ENCODE measurements at regions of chr1 and their contacts with region 1.

Region 1: DNA sequence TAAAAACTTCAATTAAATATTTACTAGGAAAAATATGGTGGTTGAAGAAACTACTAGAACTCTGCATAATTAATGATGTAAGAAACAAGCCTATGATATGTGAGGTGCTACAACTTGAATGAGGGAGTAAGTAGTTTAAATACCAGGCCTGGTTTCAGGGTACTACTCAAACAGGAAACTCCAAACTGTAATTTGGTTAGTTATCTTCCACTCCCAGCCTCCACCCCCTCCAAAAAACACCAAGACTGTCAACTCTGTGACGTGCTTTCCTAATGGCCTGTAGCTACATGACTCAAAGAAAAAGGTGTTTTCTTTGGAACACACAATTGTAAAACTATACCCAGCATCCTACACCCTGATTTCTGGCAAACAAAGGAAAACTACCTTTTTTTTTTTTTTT is 55.9 kb upstream of the RCC1 start:
- DNase-seq: peak; percentile 49
- H3K4me3 Mint-ChIP-seq: peak overlapping the region; percentile 47
- H3K27ac Mint-ChIP-seq: peak overlapping the region; percentile 88
- H3K4me1 Mint-ChIP-seq: peaks cover 42% of the 10 kb centered on the region
- H3K27me3 Mint-ChIP-seq: no peaks in the 10 kb centered on the region

Region 2: GRCh38 chr1:27779122-27779521 is 670.8 kb before region 1 on chr1:
- intact Hi-C with region 1: no loop called
- DNase-seq: no peak
- H3K4me3 Mint-ChIP-seq: no peak overlapping the region
- H3K27ac Mint-ChIP-seq: no peak overlapping the region
- H3K4me1 Mint-ChIP-seq: peaks cover 21% of the 10 kb centered on the region
- H3K27me3 Mint-ChIP-seq: no peaks in the 10 kb centered on the region

Region 3: GRCh38 chr1:28259307-28260167 is 190.4 kb before region 1 on chr1 and contains the start of gene SESN2:
- intact Hi-C with region 1: loop called (anchors 1 kb)
- DNase-seq: peak; percentile 99
- H3K4me3 Mint-ChIP-seq: peak within 1 kb of the TSS; percentile 82
- H3K27ac Mint-ChIP-seq: peak within 1 kb of the TSS; percentile 90
- H3K4me1 Mint-ChIP-seq: peaks cover 51% of the 10 kb centered on the region
- H3K27me3 Mint-ChIP-seq: no peaks in the 10 kb centered on the region
- total RNA-seq, gene SESN2: 18.7 and 19.3 TPM in 2 replicates

Region 4: GRCh38 chr1:28369371-28370238 is 80.3 kb before region 1 on chr1 and contains the start of gene PHACTR4:
- intact Hi-C with region 1: loop called (anchors 5 kb)
- DNase-seq: peak; percentile 78
- H3K4me3 Mint-ChIP-seq: peak within 1 kb of the TSS; percentile 91
- H3K27ac Mint-ChIP-seq: peak within 1 kb of the TSS; percentile 95
- H3K4me1 Mint-ChIP-seq: peaks cover 36% of the 10 kb centered on the region
- H3K27me3 Mint-ChIP-seq: peaks cover 3% of the 10 kb centered on the region
- total RNA-seq, gene PHACTR4: 28.9 and 31.8 TPM in 2 replicates

Region 5: DNA sequence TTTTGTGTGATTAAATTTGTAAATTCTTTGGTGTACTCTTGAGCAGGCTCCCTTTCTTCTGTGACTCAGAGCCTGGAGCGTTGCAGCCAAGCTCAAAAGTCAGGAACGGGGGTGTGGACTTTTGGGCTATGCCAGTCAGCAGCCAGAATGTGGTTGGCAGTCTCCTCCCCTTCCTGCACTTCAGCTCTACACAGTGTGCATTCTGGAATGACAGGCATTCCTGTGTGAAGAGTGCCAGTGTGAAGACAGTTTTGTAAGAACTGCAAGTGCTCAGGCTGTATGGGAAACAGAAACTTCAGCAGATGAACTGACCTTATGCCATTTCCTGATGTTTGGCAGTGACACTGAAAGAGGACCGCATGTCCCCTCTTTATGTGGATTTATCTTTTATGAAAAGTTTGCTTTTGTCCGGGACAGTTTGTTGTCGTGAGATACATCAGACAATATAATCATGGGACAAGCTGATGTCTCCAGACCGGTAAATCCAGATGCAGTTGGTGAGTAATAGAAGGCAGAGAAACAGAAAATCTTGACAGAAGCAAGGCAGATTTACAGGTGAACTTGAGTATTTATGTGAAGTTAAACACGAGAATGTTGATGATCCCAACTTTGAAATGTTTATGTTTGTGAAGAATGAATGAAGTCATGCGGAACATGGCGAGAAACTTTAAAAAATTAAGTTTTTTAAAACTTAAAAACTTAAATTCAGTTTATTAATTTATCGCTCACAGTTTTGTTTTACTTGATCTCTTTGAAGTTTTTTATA is 11.8 kb before region 1 on chr1:
- intact Hi-C with region 1: loop called (anchors 1 kb)
- DNase-seq: peak; percentile 5
- H3K4me3 Mint-ChIP-seq: peak overlapping the region; percentile 75
- H3K27ac Mint-ChIP-seq: peak overlapping the region; percentile 56
- H3K4me1 Mint-ChIP-seq: peaks cover 29% of the 10 kb centered on the region
- H3K27me3 Mint-ChIP-seq: no peaks in the 10 kb centered on the region